Mammary epithelial cell (primary cell): ENCODE measurements at regions of chr9 and their contacts with region 1.

Region 1: GRCh38 chr9:24545285-24545684 is 412 bp downstream of the IZUMO3 start:
- DNase-seq: no peak
- H3K4me3 ChIP-seq: no peak overlapping the region
- H3K27ac ChIP-seq: no peak overlapping the region
- H3K4me1 ChIP-seq: no peaks in the 10 kb centered on the region
- H3K27me3 ChIP-seq: no peaks in the 10 kb centered on the region
- CTCF ChIP-seq: no peak

Region 2: GRCh38 chr9:24189986-24190385 is 355.3 kb before region 1 on chr9:
- CTCF ChIA-PET with region 1: no interaction called
- dilution Hi-C with region 1: no loop called
- in situ Hi-C with region 1: no loop called
- intact Hi-C with region 1: no loop called
- DNase-seq: peak; percentile 10
- H3K4me3 ChIP-seq: no peak overlapping the region
- H3K27ac ChIP-seq: no peak overlapping the region
- H3K4me1 ChIP-seq: no peaks in the 10 kb centered on the region
- H3K27me3 ChIP-seq: no peaks in the 10 kb centered on the region
- CTCF ChIP-seq: no peak

Region 3: GRCh38 chr9:24625097-24625496 is 79.8 kb after region 1 on chr9:
- CTCF ChIA-PET with region 1: no interaction called
- dilution Hi-C with region 1: no loop called
- in situ Hi-C with region 1: loop called in 1 of 2 experiments (anchors 25 kb)
- intact Hi-C with region 1: no loop called
- DNase-seq: peak; percentile 19
- H3K4me3 ChIP-seq: no peak overlapping the region
- H3K27ac ChIP-seq: no peak overlapping the region
- H3K4me1 ChIP-seq: no peaks in the 10 kb centered on the region
- H3K27me3 ChIP-seq: no peaks in the 10 kb centered on the region
- CTCF ChIP-seq: no peak

Region 4: GRCh38 chr9:24912767-24913166 is 367.5 kb after region 1 on chr9:
- CTCF ChIA-PET with region 1: no interaction called
- dilution Hi-C with region 1: no loop called
- in situ Hi-C with region 1: no loop called
- intact Hi-C with region 1: no loop called
- DNase-seq: no peak
- H3K4me3 ChIP-seq: no peak overlapping the region
- H3K27ac ChIP-seq: no peak overlapping the region
- H3K4me1 ChIP-seq: no peaks in the 10 kb centered on the region
- H3K27me3 ChIP-seq: no peaks in the 10 kb centered on the region
- CTCF ChIP-seq: no peak